Motor neuron (in vitro differentiated cells): ENCODE measurements at regions of chr3 and their contacts with region 1.

Region 1: GRCh38 chr3:118817748-118818165 is 216.9 kb downstream of the IGSF11 start:
- ATAC-seq: peak in 7 of 8 experiments; percentile 39 to 79 (median 65)
- H3K4me3 ChIP-seq: no peak overlapping the region
- H3K27ac ChIP-seq: no peak overlapping the region
- H3K4me1 ChIP-seq: peaks cover 3 to 14% of the 10 kb centered on the region in 2 donors

Region 2: DNA sequence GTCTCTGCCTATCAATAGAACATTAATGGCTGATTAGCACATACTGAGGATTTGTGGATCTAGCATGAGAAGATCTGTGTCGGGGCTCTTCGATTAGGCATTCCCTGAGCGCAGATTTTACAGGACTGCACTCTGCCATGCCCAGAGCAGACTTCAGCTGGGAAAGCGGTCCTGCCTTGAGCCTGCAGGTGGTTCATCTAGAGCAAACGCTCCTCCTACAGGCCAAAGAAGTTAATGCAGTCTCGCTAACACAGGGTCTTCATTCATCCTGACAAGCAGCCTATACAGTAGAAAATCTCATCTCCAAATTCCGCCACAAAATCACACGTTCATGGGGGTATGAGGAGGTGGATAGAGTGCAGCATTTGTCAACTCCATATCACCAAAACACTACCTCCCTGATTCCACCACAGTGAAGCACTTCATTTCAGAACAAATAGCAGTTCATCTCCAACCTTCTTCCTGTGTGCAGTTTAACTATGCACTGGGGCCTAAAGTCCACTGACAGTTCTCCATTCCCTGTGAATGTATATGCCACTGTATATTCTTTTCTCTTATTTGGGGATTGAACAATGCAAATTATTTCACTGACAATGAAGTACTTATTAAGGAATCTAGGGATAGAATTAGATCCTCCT is 188.9 kb before region 1 on chr3:
- in situ Hi-C with region 1: loop called in 1 of 9 experiments (anchors 25 kb)
- ATAC-seq: peak; percentile 93 to 100 (median 98)
- H3K4me3 ChIP-seq: no peak overlapping the region
- H3K27ac ChIP-seq: no peak overlapping the region
- H3K4me1 ChIP-seq: peaks cover 5 to 11% of the 10 kb centered on the region in 2 donors